ENCODE measurements at regions of chr14 and their contacts with region 1.

Region 1: DNA sequence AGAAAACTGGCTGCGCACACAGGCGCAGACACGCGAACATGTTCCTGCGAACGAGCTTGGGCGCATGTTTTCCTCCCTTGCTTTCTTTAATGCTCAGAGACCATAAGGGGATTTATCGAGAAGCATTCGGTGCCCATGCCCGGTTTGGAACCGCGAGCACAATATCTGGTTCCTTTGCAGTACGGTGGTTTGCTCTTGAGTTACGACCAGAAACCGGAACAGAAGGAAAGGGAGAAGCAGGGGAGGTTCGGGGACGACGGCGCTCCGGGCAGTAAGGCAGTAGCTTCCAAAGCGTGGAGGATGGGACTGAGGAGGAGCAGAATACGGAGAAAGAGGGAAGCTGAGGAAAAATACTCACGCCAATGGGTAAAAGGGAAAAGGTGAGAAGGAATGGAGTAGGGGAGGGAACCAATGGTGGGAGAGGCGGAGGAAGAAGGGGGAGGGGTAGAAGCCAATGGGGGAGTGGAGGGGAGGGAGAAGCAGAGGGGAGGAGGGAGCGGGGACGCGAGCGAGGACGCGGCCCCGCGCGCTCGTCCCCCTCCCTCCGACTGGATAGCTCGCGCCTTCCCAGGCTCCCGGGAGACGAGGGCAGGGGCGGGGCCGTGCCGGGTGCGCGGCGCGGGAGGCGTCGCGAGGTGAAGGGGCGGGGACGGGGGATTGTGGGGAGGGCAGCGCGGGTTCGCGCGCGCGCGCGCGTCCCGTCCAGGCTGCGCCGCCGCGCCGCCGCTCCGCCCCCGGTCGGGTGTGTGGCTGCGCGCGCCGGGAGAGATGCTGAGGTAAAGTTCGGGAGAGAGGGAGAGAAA is 625 bp upstream of the ARHGAP5 start:
- DNase-seq: peak; percentile 98
- H3K4me3 ChIP-seq: peak overlapping the region; percentile 90 to 100 (median 98)
- H3K27ac ChIP-seq: peak overlapping the region; percentile 98 to 100 (median 100)
- H3K4me1 ChIP-seq: peaks cover 0 to 49% (median 33%) of the 10 kb centered on the region in 4 donors
- H3K27me3 ChIP-seq: no peaks in the 10 kb centered on the region
- CTCF ChIP-seq: no peak
- EP300 ChIP-seq: no peak
- POLR2A ChIP-seq: peak; percentile 74 to 81

Region 2: DNA sequence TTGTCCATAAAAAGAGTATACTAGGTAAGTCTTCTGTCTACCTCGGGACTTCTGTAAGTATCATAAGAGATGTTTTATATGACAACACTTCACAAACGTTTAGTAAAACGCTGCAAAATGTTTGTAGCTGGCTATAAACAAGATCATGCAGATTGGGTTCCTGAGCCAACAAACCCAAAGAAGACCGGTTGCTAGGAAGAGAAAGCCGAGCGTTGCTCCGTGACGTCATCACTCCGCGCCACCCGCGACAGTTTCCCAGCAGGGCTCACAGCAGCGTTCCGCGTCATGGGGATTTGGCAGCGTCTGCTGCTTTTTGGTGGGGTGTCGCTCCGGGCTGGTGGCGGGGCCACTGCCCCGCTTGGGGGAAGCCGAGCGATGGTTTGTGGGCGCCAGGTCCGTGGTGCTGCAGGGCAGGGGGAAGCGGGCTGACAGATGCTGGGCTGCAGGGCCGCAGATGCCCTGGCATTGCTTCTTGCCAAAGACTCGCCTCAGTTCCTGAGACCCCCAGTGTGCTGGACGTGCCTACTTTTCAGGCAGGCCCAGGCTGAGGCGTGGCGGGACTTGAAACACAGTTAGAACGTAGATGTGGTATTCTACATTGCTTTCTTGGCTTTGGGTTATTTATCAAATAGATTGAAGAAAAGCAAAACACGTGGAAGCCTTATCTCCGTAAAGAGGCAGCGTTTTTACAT is 515.2 kb before region 1 on chr14 and contains the start of gene NUBPL:
- intact Hi-C with region 1: loop called (anchors 5 kb)
- DNase-seq: peak; percentile 98
- H3K4me3 ChIP-seq: peak within 1 kb of the TSS; percentile 65 to 81 (median 70)
- H3K27ac ChIP-seq: peak within 1 kb of the TSS; percentile 84 to 91 (median 86)
- H3K4me1 ChIP-seq: peaks cover 0 to 7% (median 3%) of the 10 kb centered on the region in 4 donors
- H3K27me3 ChIP-seq: no peaks in the 10 kb centered on the region
- CTCF ChIP-seq: no peak
- EP300 ChIP-seq: peak in 2 of 4 donors; percentile 19 to 81
- POLR2A ChIP-seq: peak; percentile 29 to 36
- total RNA-seq, gene NUBPL: 9.2 to 15.5 (median 13.2) TPM

Region 3: DNA sequence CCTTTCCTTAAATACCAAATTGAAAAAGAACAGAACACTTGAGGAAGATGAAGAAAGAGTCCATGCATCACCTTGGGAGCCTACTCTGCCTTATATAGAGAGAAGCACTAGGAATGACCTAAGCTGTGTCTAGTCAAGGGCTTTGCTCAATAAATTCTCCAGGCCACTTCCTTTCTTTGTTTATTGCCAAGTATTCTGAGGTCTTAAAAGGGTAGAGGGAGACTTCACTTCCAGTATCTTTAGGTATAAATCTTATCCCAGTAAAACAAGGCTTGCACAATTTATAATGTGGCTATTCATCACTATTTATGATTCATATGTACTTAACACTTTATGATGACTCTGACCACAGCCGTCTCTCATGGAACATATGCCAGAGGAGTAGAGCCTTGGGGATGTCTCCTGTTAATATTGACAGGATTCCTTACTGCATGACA is 84.5 kb before region 1 on chr14:
- intact Hi-C with region 1: loop called (anchors 5 kb)
- DNase-seq: no peak
- H3K4me3 ChIP-seq: no peak overlapping the region
- H3K27ac ChIP-seq: peak overlapping the region; percentile 4 to 73 (median 48)
- H3K4me1 ChIP-seq: peaks cover 0 to 50% (median 38%) of the 10 kb centered on the region in 4 donors
- H3K27me3 ChIP-seq: no peaks in the 10 kb centered on the region
- CTCF ChIP-seq: no peak
- EP300 ChIP-seq: peak; percentile 52 to 93 (median 80)
- POLR2A ChIP-seq: no peak

Region 4: GRCh38 chr14:32202998-32203882 is 126.8 kb after region 1 on chr14 and contains the start of gene RNU6-8:
- intact Hi-C with region 1: loop called (anchors 1 kb)
- DNase-seq: peak; percentile 95
- H3K4me3 ChIP-seq: peak within 1 kb of the TSS; percentile 64 to 68 (median 65)
- H3K27ac ChIP-seq: peak within 1 kb of the TSS; percentile 78 to 87 (median 84)
- H3K4me1 ChIP-seq: peaks cover 0 to 12% (median 9%) of the 10 kb centered on the region in 4 donors
- H3K27me3 ChIP-seq: no peaks in the 10 kb centered on the region
- CTCF ChIP-seq: no peak
- EP300 ChIP-seq: no peak
- POLR2A ChIP-seq: peak; percentile 43 to 58
- total RNA-seq, gene RNU6-8: not detected

Region 5: DNA sequence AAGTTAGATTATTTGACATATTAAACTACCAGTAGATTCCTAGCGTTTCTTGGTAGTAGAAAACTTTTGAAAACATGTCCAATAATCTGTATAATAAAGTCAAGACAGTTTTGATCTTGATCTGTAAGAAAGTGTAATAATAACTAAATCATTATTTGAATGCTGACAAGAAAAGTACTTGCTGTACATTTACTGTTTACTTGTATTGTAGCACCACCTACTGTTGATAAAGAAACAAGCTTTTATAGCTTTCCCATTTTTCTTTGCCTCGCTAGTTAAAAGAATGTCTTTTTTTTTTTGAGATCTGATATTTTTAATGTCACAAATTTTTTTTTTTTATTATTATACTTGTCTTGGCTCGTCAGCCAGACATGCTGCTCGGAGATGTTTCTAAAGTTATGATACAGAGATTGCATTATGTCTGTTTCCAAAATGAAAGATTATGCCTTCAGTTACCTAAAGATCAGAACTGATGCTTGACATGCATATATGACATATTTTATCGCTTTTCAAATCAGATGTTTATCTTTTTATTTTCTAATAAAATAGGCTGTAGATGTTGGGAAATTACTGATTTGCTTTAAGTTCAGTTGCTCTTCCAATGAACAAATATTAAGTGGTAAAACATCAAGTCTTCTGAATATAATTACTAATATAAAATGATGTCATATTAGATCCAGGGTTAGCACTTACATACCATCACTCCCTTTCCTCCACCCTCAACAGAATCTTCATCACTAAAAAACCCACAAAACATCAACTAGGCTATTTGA is 393.1 kb after region 1 on chr14:
- intact Hi-C with region 1: loop called (anchors 2 kb)
- DNase-seq: no peak
- H3K4me3 ChIP-seq: no peak overlapping the region
- H3K27ac ChIP-seq: peak overlapping the region; percentile 70 to 82 (median 72)
- H3K4me1 ChIP-seq: peaks cover 0 to 75% (median 51%) of the 10 kb centered on the region in 4 donors
- H3K27me3 ChIP-seq: no peaks in the 10 kb centered on the region
- CTCF ChIP-seq: peak in 3 of 4 experiments; percentile 31 to 51 (median 43)
- EP300 ChIP-seq: no peak
- POLR2A ChIP-seq: no peak

Region 6: DNA sequence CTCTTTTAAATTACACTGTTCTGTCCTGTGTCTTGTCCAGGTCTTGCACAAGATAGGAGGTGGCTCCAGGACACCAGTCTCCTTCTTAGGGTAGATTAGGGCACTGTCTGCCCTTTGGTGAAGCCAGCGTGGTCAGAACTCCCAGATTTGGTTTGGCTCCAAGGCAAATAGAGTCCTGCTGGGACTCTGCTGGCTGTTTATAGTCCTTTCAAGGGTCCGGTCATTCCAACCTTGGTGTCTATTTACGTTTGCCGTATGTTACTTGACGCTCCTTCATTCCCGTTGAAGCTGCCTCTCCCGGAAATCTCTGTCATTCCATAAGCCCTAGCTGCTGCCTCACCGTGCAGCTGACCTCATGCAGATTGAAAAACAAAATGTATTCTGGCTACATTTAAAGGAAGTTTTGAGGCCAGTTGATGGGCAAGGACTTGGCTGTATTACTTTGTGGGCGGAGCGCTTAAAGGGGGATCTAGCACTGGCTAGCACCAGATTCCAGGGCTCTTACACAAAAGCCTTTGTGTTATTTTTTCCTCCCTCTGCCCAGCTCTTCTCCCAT is 433.2 kb after region 1 on chr14:
- intact Hi-C with region 1: loop called (anchors 5 kb)
- DNase-seq: peak; percentile 83
- H3K4me3 ChIP-seq: peak overlapping the region; percentile 4 to 19 (median 13)
- H3K27ac ChIP-seq: peak overlapping the region; percentile 75 to 88 (median 82)
- H3K4me1 ChIP-seq: peaks cover 0 to 51% (median 27%) of the 10 kb centered on the region in 4 donors
- H3K27me3 ChIP-seq: no peaks in the 10 kb centered on the region
- CTCF ChIP-seq: no peak
- EP300 ChIP-seq: peak in 3 of 4 donors; percentile 24 to 80 (median 78)
- POLR2A ChIP-seq: no peak

Region 7: DNA sequence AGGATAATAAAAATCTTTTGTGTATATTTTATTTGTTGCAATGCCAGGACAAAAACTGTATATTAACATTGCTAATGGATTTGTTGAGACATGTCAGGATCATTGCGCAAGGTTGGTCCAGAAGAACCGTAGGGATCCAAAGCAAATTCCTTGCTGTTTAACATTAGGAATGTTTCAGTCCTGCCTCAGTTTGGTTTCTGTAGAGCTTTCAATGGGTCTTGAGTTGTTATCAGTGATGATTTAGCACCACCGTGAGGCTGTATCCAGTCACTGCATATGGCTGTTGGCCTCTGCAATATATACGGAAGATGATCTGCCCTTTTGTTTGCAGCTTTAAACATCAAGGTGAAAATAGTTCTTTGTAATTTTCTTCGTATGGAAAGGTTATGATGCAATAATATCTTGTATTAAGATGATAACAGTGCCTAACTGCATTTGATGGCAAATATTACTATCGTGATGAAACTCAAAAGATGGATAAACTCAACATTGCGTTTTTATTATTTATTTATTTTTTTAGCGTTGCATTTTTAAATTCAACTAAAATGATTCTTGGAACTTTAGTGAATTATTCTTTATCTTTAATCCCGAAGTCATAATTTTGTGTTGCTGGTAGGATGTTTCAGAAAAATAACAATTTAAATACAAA is 483.9 kb after region 1 on chr14:
- intact Hi-C with region 1: loop called (anchors 5 kb)
- DNase-seq: peak; percentile 69
- H3K4me3 ChIP-seq: no peak overlapping the region
- H3K27ac ChIP-seq: peak overlapping the region; percentile 53 to 84 (median 74)
- H3K4me1 ChIP-seq: peaks cover 0 to 51% (median 43%) of the 10 kb centered on the region in 4 donors
- H3K27me3 ChIP-seq: no peaks in the 10 kb centered on the region
- CTCF ChIP-seq: peak; percentile 81 to 91 (median 90)
- EP300 ChIP-seq: no peak
- POLR2A ChIP-seq: no peak

Measured in sigmoid colon (tissue), 7 donors.